GM10248 (cell line): ENCODE measurements at regions of chr4 and their contacts with region 1.

Region 1: GRCh38 chr4:73258686-73259570 is at the start of gene ANKRD17:
- DNase-seq: peak; percentile 88
- CTCF ChIP-seq: no peak

Region 2: GRCh38 chr4:73127839-73128453 is 131.0 kb before region 1 on chr4:
- CTCF ChIA-PET with region 1: interaction called, 16 read pairs
- POLR2A ChIA-PET with region 1: no interaction called
- DNase-seq: no peak
- CTCF ChIP-seq: peak; percentile 28

Region 3: DNA sequence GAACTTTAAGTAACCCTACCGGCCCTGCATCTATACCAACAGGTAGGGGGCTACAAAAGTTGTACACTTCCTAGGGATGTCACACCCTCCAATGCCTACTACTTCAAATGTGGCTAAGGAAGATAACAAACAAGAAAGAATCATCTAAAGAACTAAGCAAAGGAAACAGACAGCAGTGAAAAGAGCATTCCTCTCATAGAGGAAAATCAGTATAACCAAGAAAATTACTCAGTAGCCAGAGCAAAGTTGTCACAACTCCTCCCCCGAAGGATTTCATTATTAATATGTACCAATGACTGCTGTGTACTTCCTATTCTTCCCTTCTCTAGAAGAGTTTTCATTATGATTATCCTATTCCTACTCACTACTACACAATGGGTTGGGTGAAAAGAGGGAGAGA is 13.0 kb before region 1 on chr4:
- CTCF ChIA-PET with region 1: interaction called, 33 read pairs
- POLR2A ChIA-PET with region 1: no interaction called
- DNase-seq: no peak
- CTCF ChIP-seq: no peak